GM23248 (cell line): ENCODE measurements at regions of chr5 and their contacts with region 1.

Region 1: GRCh38 chr5:156815988-156816599 is 34.0 kb upstream of the PPP1R2B start:
- DNase-seq: peak; percentile 58
- H3K4me3 ChIP-seq: no peak overlapping the region
- H3K27ac ChIP-seq: no peak overlapping the region
- H3K4me1 ChIP-seq: no peaks in the 10 kb centered on the region
- H3K27me3 ChIP-seq: no peaks in the 10 kb centered on the region

Region 2: GRCh38 chr5:155270725-155271124 is 1545.4 kb before region 1 on chr5:
- in situ Hi-C with region 1: no loop called
- DNase-seq: no peak
- H3K4me3 ChIP-seq: no peak overlapping the region
- H3K27ac ChIP-seq: no peak overlapping the region
- H3K4me1 ChIP-seq: no peaks in the 10 kb centered on the region
- H3K27me3 ChIP-seq: no peaks in the 10 kb centered on the region

Region 3: DNA sequence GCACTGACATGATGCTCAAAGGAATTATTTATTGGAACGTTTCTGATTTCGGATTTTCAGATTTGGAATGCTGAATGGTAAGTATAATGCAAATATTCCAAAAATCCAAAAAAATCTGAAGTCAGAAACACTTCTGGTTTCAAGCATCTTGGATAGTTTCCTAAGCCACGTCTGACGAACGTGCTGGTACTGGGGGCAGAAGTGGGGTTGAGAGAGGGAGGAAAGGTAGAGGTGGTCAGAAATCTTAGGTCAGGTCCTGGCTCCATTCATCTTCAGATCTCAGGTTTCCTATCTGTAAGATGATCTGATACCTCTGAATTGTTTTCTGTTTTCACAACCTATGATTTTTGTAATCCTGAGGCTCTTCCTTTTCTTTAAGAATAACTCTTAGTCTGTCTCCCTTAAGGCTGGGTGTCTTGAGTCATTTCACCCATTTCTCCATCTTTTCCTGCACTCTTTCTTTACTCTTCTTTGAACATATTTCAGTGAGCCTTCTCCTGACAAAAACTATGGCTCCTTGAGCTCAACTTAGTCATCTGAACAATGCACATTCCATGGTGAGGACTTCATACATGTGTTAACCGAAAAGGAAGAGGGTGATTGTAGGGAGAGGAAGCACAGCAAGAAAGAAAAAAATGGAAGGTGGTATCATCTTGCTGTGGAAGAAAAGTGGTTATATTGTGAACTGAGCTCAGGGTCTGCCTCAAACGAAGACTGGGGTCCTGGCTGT is 485.8 kb before region 1 on chr5:
- in situ Hi-C with region 1: loop called (anchors 10 kb)
- DNase-seq: peak; percentile 63
- H3K4me3 ChIP-seq: no peak overlapping the region
- H3K27ac ChIP-seq: no peak overlapping the region
- H3K4me1 ChIP-seq: peaks cover 30% of the 10 kb centered on the region
- H3K27me3 ChIP-seq: no peaks in the 10 kb centered on the region